ENCODE measurements at regions of chr20 and their contacts with region 1.

Region 1: DNA sequence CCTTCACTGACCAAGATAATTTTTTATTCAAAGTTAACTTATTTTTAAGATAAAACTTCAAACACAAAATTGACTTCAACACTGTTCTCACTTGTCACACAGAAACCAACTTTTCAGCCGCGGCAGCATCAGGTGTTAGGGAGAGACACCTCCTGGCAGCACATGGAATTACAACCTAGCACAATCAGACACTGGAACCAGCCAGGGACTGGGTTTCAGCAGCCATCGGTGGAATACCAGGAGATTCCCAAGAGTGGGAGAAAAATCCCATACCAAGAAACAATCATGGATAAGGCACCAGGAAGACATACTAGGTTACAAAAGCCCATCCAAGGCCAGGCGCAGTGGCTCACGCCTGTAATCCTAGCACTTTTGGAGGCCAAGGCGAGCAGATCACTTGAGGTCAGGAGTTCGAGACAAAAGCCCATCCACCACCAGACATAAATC is 70.0 kb downstream of the SNX5 start:
- DNase-seq: peak; percentile 90
- H3K4me3 Mint-ChIP-seq: no peak overlapping the region
- H3K27ac Mint-ChIP-seq: no peak overlapping the region
- H3K4me1 Mint-ChIP-seq: peaks cover 24% of the 10 kb centered on the region
- H3K27me3 Mint-ChIP-seq: peaks cover 33% of the 10 kb centered on the region

Region 2: DNA sequence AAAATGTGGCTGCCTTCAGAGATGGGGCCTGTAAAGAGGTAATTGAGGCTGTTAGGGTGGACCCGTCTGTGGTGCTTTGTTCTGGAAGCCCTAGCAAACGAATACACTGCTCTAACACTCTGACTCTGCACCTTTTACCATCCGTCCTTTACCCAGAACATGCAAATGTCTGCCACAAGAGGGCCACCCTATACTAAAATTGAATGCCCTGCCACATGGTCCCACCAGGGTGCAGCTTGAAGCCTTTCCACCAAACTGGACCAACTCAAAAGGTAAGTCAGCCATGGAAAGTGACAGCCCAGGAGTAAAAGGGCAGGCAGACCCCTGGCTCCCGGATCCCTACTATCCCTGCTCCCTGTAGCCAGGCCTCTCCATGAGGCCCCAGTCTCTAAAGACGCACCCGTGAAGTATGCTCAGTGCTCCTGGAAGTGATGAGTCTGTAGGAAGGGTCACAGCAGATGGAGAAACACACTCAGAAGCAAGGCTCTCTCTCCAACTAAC is 361.6 kb before region 1 on chr20:
- intact Hi-C with region 1: loop called (anchors 1 kb)
- DNase-seq: peak; percentile 91
- H3K4me3 Mint-ChIP-seq: no peak overlapping the region
- H3K27ac Mint-ChIP-seq: no peak overlapping the region
- H3K4me1 Mint-ChIP-seq: peaks cover 26% of the 10 kb centered on the region
- H3K27me3 Mint-ChIP-seq: peaks cover 25% of the 10 kb centered on the region

Region 3: GRCh38 chr20:17693444-17694001 is 205.0 kb before region 1 on chr20:
- intact Hi-C with region 1: no loop called
- DNase-seq: no peak
- H3K4me3 Mint-ChIP-seq: no peak overlapping the region
- H3K27ac Mint-ChIP-seq: no peak overlapping the region
- H3K4me1 Mint-ChIP-seq: no peaks in the 10 kb centered on the region
- H3K27me3 Mint-ChIP-seq: peaks cover 33% of the 10 kb centered on the region

Region 4: GRCh38 chr20:17825960-17826843 is 72.4 kb before region 1 on chr20:
- intact Hi-C with region 1: loop called (anchors 1 kb)
- DNase-seq: peak; percentile 58
- H3K4me3 Mint-ChIP-seq: no peak overlapping the region
- H3K27ac Mint-ChIP-seq: peak overlapping the region; percentile 7
- H3K4me1 Mint-ChIP-seq: peaks cover 9% of the 10 kb centered on the region
- H3K27me3 Mint-ChIP-seq: no peaks in the 10 kb centered on the region

Region 5: DNA sequence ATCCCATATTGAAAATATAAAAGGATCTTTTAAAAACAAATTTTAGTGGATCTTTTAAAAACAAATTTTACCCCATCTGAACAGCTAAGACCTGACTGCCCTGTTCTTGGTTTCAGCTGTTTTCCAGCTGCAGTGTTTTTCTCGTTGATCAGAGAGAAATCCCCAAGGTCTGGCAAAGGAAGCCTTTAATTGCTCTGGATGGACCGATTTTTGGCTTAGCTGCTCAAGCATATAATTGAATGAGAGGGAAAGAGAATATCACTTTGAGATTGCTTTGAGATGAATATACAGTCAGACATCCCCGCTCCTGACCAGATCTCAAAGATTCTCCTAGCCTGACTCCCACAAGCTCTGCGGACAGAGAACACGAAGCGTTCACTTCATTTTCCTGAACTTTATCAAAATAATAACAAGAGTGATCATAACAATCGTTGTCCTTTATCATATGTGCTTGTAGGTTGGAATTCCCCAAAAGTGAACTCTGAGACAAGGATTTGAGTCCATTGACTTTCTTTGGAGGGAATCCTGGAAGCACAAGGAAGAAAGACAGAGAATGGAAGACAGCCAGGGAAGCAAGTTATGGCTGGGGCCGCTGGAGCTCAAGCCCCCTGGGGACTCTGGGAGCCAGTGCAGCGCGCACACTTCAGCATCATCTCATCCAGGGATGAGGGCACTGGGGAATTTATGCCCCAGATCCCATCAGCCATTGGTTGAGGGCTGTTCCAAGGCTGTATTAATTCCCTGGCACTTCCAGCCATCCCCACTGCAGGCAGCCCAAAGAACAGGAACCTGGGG is 31.2 kb before region 1 on chr20:
- intact Hi-C with region 1: no loop called
- DNase-seq: no peak
- H3K4me3 Mint-ChIP-seq: no peak overlapping the region
- H3K27ac Mint-ChIP-seq: no peak overlapping the region
- H3K4me1 Mint-ChIP-seq: peaks cover 5% of the 10 kb centered on the region
- H3K27me3 Mint-ChIP-seq: peaks cover 17% of the 10 kb centered on the region

Region 6: DNA sequence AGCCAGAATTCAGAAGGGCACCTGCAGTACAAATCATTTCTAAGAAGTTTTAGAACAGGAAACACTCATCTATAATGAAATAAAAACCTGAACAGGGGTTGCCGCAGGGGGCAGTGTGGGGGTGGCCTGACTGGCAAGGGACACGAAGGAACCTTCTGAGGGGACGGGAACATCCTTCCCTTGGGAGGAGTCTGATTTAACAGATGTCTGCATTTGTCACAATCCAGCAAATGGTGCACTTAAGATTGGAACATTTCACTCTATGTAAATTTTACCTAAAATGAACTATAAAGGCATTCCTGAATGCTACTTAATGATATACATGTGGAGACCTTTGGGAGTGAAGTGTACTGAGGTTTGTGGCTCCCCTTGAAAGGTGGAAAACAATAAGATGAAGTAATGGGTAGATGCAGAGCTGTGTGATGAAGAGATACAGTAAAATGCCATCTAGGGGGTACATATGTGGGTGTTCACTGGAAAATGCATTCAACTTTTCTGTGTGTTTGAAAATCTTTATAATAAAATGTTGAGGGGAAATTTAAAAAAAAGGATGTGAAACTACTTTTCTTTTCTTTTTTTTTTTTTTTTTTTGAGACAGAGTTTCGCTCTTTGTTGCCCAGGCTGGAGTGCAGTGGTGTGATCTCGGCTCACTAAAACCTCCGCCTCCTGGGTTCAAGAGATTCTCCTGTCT is 19.5 kb before region 1 on chr20:
- intact Hi-C with region 1: loop called (anchors 2 kb)
- DNase-seq: no peak
- H3K4me3 Mint-ChIP-seq: no peak overlapping the region
- H3K27ac Mint-ChIP-seq: no peak overlapping the region
- H3K4me1 Mint-ChIP-seq: peaks cover 10% of the 10 kb centered on the region
- H3K27me3 Mint-ChIP-seq: peaks cover 14% of the 10 kb centered on the region

Region 7: DNA sequence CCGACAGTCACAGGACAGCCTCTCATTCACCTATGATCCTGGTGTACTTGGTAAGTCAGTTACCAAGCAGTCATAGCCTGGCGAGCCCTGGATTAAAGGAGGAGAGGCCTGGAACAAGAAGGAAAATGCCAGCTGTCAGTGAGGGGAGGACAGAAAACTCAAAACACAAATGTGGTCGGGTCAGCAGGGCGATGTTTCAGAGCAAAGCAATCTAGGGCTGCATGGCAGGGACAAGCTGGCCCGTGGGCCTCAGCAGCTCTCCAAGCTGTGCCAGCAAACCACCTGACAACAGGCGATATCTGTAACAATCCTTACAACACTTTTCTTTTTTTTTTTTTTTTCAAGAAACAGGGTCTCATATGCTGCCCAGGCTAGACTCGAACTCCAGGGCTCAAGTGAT is 110.5 kb after region 1 on chr20:
- intact Hi-C with region 1: no loop called
- DNase-seq: no peak
- H3K4me3 Mint-ChIP-seq: no peak overlapping the region
- H3K27ac Mint-ChIP-seq: no peak overlapping the region
- H3K4me1 Mint-ChIP-seq: no peaks in the 10 kb centered on the region
- H3K27me3 Mint-ChIP-seq: no peaks in the 10 kb centered on the region

Region 8: GRCh38 chr20:18137412-18138265 is 239.1 kb after region 1 on chr20 and contains the starts of genes KAT14 and PET117:
- intact Hi-C with region 1: no loop called
- DNase-seq: peak; percentile 98
- H3K4me3 Mint-ChIP-seq: peak within 1 kb of the TSS; percentile 75
- H3K27ac Mint-ChIP-seq: peak within 1 kb of the TSS; percentile 89
- H3K4me1 Mint-ChIP-seq: peaks cover 26% of the 10 kb centered on the region
- H3K27me3 Mint-ChIP-seq: peaks cover 3% of the 10 kb centered on the region
- total RNA-seq, gene KAT14: 16.5 and 16.8 TPM in 2 replicates
- total RNA-seq, gene PET117: 18.5 and 19.5 TPM in 2 replicates

Measured in activated CD4-positive, alpha-beta T cell treated with anti-CD3 and anti-CD28 coated beads, Interleukin-2, amount 10 ng/mL, durations not matched to agents 24 days and 14 days (primary cell).